Heart right ventricle (tissue), 16 donors: ENCODE measurements at regions of chr15 and their contacts with region 1.

Region 1: GRCh38 chr15:86711476-86711875 is 631.8 kb downstream of the AGBL1 start:
- DNase-seq: no peak
- ATAC-seq: no peak
- H3K4me3 ChIP-seq: no peak overlapping the region
- H3K27ac ChIP-seq: no peak overlapping the region
- H3K4me1 ChIP-seq: no peaks in the 10 kb centered on the region
- H3K27me3 ChIP-seq: no peaks in the 10 kb centered on the region
- CTCF ChIP-seq: no peak

Region 2: GRCh38 chr15:86663333-86663732 is 48.1 kb before region 1 on chr15:
- intact Hi-C with region 1: loop called in 2 of 10 experiments (anchors 10 kb)
- DNase-seq: no peak
- ATAC-seq: no peak
- H3K4me3 ChIP-seq: no peak overlapping the region
- H3K27ac ChIP-seq: no peak overlapping the region
- H3K4me1 ChIP-seq: no peaks in the 10 kb centered on the region
- H3K27me3 ChIP-seq: peaks cover 0 to 5% (median 0%) of the 10 kb centered on the region in 7 donors
- CTCF ChIP-seq: no peak

Region 3: GRCh38 chr15:86700864-86701619 is 10.4 kb before region 1 on chr15:
- intact Hi-C with region 1: loop called in 1 of 10 experiments (anchors 1 kb)
- DNase-seq: no peak
- ATAC-seq: no peak
- H3K4me3 ChIP-seq: no peak overlapping the region
- H3K27ac ChIP-seq: no peak overlapping the region
- H3K4me1 ChIP-seq: no peaks in the 10 kb centered on the region
- H3K27me3 ChIP-seq: peaks cover 0 to 4% (median 0%) of the 10 kb centered on the region in 7 donors
- CTCF ChIP-seq: no peak